IMR-90 (cell line): ENCODE measurements at regions of chr12 and their contacts with region 1.

Region 1: GRCh38 chr12:55899082-55899481 is 28.6 kb downstream of the PYM1 start:
- DNase-seq: peak; percentile 67
- ATAC-seq: peak; percentile 84
- H3K4me3 ChIP-seq: no peak overlapping the region
- H3K27ac ChIP-seq: no peak overlapping the region
- H3K4me1 ChIP-seq: peaks cover 4% of the 10 kb centered on the region; the same call in 1 of the 2 replicates
- H3K27me3 ChIP-seq: no peaks in the 10 kb centered on the region
- CTCF ChIP-seq: no peak
- POLR2A ChIP-seq: no peak
- RAD21 ChIP-seq: no peak

Region 2: GRCh38 chr12:56348776-56349175 is 449.7 kb after region 1 on chr12:
- CTCF ChIA-PET with region 1: no interaction called
- POLR2A ChIA-PET with region 1: interaction called, 11 read pairs
- dilution Hi-C with region 1: no loop called
- in situ Hi-C with region 1: no loop called
- intact Hi-C with region 1: no loop called
- DNase-seq: no peak
- ATAC-seq: no peak
- H3K4me3 ChIP-seq: no peak overlapping the region
- H3K27ac ChIP-seq: no peak overlapping the region
- H3K4me1 ChIP-seq: no peaks in the 10 kb centered on the region
- H3K27me3 ChIP-seq: no peaks in the 10 kb centered on the region
- CTCF ChIP-seq: no peak
- POLR2A ChIP-seq: no peak
- RAD21 ChIP-seq: no peak